ENCODE measurements at regions of chr19 and their contacts with region 1.

Region 1: DNA sequence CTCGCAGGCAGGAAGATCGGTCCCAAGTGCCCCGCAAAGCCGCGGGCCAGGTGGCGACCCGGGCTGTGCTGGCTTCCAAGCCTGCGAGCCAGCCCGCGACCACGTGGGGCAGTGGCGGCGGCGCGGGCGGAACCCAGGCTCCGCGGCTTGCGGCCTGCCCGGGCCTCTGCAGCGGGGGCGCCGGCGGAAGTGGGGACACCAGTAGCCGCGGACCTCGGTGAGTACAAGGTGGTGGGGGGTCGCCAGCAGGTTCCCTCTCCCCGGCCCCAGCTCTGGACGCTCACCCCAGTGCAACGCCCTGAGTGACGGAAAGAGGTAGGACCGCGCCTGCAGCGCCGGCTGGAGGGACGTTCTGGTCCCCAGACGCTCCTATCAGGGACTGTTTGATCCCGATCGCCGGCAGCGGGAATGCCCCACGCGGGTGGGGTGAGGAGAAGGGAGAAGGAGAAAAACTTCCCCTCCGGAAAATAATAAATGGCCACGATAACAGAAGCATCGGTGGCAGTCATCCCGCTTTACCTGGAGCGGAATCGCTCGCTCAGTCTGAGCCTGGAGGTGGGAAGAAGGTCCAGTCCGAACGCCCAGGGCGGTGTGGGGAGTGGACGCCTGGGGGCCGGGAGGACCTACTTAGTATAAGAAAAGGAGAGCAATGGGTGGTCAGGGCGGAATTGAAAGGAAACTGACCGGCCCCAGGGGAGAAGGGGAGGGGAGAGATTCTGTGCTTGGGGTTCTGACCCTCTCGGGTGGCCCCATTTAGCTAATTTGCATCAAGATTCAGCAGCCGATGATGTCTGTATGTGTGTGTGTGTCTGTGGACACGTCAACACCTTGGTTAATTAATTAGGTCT is at the start of gene GEMIN7:
- DNase-seq: peak; percentile 86
- ATAC-seq: peak; percentile 15
- H3K4me3 ChIP-seq: peak within 1 kb of the TSS; percentile 71 to 98 (median 77)
- H3K4me3 Mint-ChIP-seq: peak within 1 kb of the TSS; percentile 98
- H3K27ac ChIP-seq: peak within 1 kb of the TSS; percentile 62 to 92
- H3K27ac Mint-ChIP-seq: peak within 1 kb of the TSS; percentile 94
- H3K4me1 ChIP-seq: peaks cover 40 to 49% of the 10 kb centered on the region in 2 donors
- H3K4me1 Mint-ChIP-seq: peaks cover 53% of the 10 kb centered on the region
- H3K27me3 ChIP-seq: no peaks in the 10 kb centered on the region
- H3K27me3 Mint-ChIP-seq: no peaks in the 10 kb centered on the region
- CTCF ChIP-seq: peak; percentile 11
- total RNA-seq, gene GEMIN7: 38.2 and 43.0 TPM in 2 replicates

Region 2: DNA sequence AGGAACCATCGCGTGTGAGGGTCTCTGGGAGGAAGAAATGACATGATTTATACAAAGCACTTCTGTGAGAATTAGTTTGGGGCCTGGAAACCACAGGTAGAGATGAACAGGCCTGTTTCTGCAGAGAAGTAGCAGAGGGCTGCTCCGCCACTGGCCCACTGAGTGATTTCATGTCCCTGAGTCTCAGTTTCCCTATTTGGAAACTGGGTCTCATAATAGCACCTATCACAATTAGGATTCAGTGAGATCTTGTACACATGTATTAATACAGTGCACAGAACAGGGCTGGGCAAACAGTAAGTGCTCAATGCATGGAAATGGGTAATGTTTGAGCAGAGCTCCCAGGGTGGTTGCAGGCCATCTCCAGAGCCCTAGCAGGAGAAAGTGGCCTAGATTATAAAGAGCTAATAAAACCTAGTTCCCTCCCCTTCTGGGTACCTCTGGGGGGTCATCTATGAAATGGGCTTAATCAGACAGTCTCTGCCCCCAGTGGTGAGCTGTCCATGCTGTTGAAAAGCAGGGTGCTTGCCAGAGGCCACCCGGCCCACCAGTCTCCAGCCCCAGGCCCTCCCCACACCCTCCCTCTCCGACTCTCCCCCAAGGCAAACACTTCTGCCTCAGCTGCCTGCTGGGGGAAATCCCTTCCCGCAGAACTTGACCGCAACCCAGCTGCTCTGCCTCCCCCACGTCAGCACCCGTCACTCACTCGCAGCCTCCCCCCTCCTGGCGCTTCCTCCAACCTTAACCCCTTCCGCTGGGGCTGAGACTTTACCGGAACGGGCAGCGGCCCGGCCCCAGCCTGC is 326.3 kb before region 1 on chr19:
- CTCF ChIA-PET with region 1: no interaction called
- POLR2A ChIA-PET with region 1: no interaction called
- intact Hi-C with region 1: loop called (anchors 5 kb)
- DNase-seq: peak; percentile 97
- ATAC-seq: peak; percentile 69
- H3K4me3 ChIP-seq: peak overlapping the region; percentile 44 to 94 (median 69)
- H3K4me3 Mint-ChIP-seq: peak overlapping the region; percentile 97
- H3K27ac ChIP-seq: peak overlapping the region; percentile 92
- H3K27ac Mint-ChIP-seq: peak overlapping the region; percentile 98
- H3K4me1 ChIP-seq: peaks cover 55 to 69% of the 10 kb centered on the region in 2 donors
- H3K4me1 Mint-ChIP-seq: peaks cover 59% of the 10 kb centered on the region
- H3K27me3 ChIP-seq: no peaks in the 10 kb centered on the region
- H3K27me3 Mint-ChIP-seq: no peaks in the 10 kb centered on the region
- CTCF ChIP-seq: no peak

Region 3: GRCh38 chr19:45038931-45039893 is 40.1 kb before region 1 on chr19 and contains the start of gene CLASRP:
- CTCF ChIA-PET with region 1: interaction called, 4 read pairs
- POLR2A ChIA-PET with region 1: interaction called, 6 read pairs
- intact Hi-C with region 1: loop called (anchors 1 kb)
- DNase-seq: peak; percentile 93
- ATAC-seq: peak; percentile 89
- H3K4me3 ChIP-seq: peak within 1 kb of the TSS; percentile 51 to 96 (median 94)
- H3K4me3 Mint-ChIP-seq: peak within 1 kb of the TSS; percentile 96
- H3K27ac ChIP-seq: peak within 1 kb of the TSS; percentile 93 to 96
- H3K27ac Mint-ChIP-seq: peak within 1 kb of the TSS; percentile 96
- H3K4me1 ChIP-seq: peaks cover 26 to 35% of the 10 kb centered on the region in 2 donors
- H3K4me1 Mint-ChIP-seq: peaks cover 40% of the 10 kb centered on the region
- H3K27me3 ChIP-seq: no peaks in the 10 kb centered on the region
- H3K27me3 Mint-ChIP-seq: no peaks in the 10 kb centered on the region
- CTCF ChIP-seq: no peak
- total RNA-seq, gene CLASRP: 277 and 285 TPM in 2 replicates

Region 4: DNA sequence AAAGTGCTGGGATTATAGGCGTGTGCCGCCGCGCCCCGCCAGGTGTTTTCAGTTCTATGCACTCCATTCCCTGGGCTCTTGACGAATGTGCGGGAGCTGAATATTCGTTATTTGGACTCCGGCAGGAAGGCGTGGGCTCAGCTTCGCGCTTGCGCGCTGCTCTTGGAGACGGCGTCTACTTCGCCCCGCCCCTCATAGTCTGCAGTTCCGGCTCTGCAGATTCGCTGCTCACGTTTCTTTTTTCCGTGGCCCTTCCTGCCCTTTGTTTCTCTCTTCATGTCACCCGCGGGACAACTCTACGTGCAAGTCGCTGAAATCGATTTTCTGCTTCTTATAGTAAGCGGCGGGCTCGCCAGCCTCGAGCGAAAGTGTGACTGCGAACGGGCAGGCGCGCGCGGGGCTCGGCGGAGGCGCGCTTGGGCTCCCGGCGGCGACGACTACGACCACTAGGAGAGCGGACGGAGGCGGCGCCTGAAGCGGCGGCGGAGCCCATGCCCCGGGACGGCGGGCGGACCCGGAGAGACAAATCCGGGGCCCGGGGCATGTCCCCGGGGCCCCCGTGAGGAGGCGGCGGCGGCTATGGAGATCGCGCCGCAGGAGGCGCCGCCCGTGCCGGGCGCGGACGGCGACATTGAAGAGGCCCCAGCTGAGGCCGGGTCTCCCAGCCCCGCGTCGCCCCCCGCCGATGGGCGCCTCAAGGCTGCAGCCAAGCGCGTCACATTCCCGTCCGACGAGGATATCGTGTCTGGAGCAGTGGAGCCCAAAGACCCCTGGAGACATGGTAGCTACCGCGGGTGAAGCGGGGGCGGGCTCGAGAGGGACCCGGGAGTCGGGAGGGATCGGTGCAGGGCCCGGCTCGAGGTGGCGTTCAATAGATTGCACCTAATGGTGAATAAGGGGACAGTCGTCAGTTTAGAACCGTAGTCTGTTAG is 13.7 kb after region 1 on chr19 and contains the start of gene PPP1R37:
- CTCF ChIA-PET with region 1: interaction called, 7 read pairs
- POLR2A ChIA-PET with region 1: interaction called, 28 read pairs
- intact Hi-C with region 1: loop called (anchors 1 kb)
- DNase-seq: peak; percentile 97
- ATAC-seq: peak; percentile 67
- H3K4me3 ChIP-seq: peak within 1 kb of the TSS; percentile 79 to 93 (median 91)
- H3K4me3 Mint-ChIP-seq: peak within 1 kb of the TSS; percentile 95
- H3K27ac ChIP-seq: peak within 1 kb of the TSS; percentile 81 to 98
- H3K27ac Mint-ChIP-seq: peak within 1 kb of the TSS; percentile 99
- H3K4me1 ChIP-seq: peaks cover 22 to 44% of the 10 kb centered on the region in 2 donors
- H3K4me1 Mint-ChIP-seq: peaks cover 62% of the 10 kb centered on the region
- H3K27me3 ChIP-seq: no peaks in the 10 kb centered on the region
- H3K27me3 Mint-ChIP-seq: no peaks in the 10 kb centered on the region
- CTCF ChIP-seq: peak; percentile 52
- total RNA-seq, gene PPP1R37: 28.1 and 37.3 TPM in 2 replicates

Region 5: DNA sequence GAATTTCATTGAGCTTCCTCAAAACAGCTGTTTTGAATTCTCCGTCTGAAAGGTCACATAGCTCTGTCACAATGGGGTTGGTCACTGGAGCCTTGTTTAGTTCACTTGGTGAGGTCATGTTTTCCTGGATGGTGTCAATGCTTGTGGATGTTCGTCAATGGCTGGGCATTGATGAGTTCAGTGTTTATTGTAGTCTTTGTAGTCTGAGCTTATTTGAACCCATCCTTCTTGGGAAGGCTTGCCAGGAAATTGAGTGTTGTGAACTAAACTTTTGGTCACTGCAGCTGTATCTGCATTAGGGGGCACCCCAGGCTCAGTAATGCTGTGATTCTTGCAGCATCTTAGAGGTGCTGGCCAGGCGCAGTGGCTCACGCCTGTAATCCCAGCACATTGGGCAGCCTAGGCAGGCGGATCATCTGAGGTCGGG is 121.3 kb after region 1 on chr19:
- CTCF ChIA-PET with region 1: no interaction called
- POLR2A ChIA-PET with region 1: no interaction called
- intact Hi-C with region 1: no loop called
- DNase-seq: no peak
- ATAC-seq: no peak
- H3K4me3 ChIP-seq: no peak overlapping the region
- H3K4me3 Mint-ChIP-seq: no peak overlapping the region
- H3K27ac ChIP-seq: no peak overlapping the region
- H3K27ac Mint-ChIP-seq: no peak overlapping the region
- H3K4me1 ChIP-seq: no peaks in the 10 kb centered on the region
- H3K4me1 Mint-ChIP-seq: no peaks in the 10 kb centered on the region
- H3K27me3 ChIP-seq: no peaks in the 10 kb centered on the region
- H3K27me3 Mint-ChIP-seq: peaks cover 6% of the 10 kb centered on the region
- CTCF ChIP-seq: no peak

Region 6: DNA sequence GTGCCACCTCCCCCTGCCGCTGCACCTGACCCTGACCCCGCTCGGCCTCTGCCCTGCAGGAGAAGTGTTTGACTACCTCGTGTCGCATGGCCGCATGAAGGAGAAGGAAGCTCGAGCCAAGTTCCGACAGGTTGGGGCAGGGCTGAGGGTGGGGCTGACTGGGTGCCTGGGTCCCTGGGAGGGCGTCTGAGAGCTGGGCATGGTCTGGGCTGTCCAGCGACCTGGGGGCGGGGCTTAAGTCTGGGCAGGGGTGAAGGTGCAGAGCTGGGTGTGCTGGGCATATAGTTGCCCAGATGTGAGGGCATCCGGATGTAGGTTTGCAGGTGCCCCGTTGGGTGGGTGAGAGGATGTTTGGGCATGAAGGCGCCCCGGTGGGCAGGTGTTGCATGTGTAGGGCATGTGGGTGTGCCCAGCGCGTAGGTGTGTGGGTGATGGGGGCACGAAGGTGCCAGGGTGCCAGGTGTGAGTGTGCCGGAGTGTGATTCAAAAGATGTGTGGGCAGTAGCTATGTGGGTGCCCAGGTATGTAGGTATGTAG is 185.6 kb after region 1 on chr19:
- CTCF ChIA-PET with region 1: no interaction called
- POLR2A ChIA-PET with region 1: interaction called, 10 read pairs
- intact Hi-C with region 1: no loop called
- DNase-seq: no peak
- ATAC-seq: no peak
- H3K4me3 ChIP-seq: no peak overlapping the region
- H3K4me3 Mint-ChIP-seq: no peak overlapping the region
- H3K27ac ChIP-seq: no peak overlapping the region
- H3K27ac Mint-ChIP-seq: no peak overlapping the region
- H3K4me1 ChIP-seq: no peaks in the 10 kb centered on the region
- H3K4me1 Mint-ChIP-seq: no peaks in the 10 kb centered on the region
- H3K27me3 ChIP-seq: no peaks in the 10 kb centered on the region
- H3K27me3 Mint-ChIP-seq: no peaks in the 10 kb centered on the region
- CTCF ChIP-seq: no peak